ENCODE measurements at regions of chr6 and their contacts with region 1.

Region 1: DNA sequence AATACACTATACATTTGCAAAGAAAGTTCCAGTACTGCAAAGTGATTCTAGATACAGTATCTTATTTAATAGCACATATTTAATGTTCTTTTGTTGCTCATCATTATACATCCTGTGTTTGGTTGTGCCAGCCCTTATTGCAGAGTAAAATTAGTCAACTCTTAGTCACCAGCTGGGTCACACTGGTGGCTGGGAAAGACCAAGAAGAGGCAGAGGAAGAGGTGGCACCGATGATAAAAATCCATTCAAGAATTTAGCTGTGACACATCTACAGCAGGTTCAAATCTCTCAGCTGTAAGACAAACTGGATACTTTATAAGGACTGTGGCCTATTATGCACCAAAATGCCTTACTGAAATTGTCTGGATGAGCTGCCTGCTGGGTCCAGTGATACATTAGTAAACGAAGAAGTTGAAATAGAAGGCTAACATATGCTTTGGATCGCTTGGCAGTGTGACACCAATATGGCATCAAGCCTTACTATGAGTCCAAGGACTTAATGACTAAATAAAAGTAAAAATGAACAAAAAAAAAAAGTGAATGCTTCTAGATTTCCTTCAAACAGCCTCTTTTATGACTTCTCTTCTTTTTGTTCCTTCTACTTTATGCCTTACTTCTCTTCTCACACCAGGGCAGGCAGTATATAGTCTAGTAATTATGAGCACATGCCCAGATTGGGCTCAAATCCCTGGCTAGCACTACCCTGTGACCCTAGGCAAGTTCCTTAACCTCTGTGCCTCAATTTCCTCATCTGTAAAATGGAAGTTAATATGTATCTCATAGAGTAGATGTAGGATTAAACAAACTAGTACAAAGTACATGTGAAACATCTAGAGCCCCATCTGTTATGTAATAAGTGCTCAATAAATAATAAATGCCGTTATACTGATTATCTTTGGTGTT is 29.4 kb upstream of the RNF8 start:
- DNase-seq: peak; percentile 66
- H3K4me3 Mint-ChIP-seq: no peak overlapping the region
- H3K27ac Mint-ChIP-seq: no peak overlapping the region
- H3K4me1 Mint-ChIP-seq: peaks cover 20% of the 10 kb centered on the region
- H3K27me3 Mint-ChIP-seq: no peaks in the 10 kb centered on the region

Region 2: GRCh38 chr6:36924131-36924530 is 400.3 kb before region 1 on chr6:
- CTCF ChIA-PET with region 1: no interaction called
- intact Hi-C with region 1: no loop called
- DNase-seq: no peak
- H3K4me3 Mint-ChIP-seq: no peak overlapping the region
- H3K27ac Mint-ChIP-seq: no peak overlapping the region
- H3K4me1 Mint-ChIP-seq: no peaks in the 10 kb centered on the region
- H3K27me3 Mint-ChIP-seq: no peaks in the 10 kb centered on the region

Region 3: DNA sequence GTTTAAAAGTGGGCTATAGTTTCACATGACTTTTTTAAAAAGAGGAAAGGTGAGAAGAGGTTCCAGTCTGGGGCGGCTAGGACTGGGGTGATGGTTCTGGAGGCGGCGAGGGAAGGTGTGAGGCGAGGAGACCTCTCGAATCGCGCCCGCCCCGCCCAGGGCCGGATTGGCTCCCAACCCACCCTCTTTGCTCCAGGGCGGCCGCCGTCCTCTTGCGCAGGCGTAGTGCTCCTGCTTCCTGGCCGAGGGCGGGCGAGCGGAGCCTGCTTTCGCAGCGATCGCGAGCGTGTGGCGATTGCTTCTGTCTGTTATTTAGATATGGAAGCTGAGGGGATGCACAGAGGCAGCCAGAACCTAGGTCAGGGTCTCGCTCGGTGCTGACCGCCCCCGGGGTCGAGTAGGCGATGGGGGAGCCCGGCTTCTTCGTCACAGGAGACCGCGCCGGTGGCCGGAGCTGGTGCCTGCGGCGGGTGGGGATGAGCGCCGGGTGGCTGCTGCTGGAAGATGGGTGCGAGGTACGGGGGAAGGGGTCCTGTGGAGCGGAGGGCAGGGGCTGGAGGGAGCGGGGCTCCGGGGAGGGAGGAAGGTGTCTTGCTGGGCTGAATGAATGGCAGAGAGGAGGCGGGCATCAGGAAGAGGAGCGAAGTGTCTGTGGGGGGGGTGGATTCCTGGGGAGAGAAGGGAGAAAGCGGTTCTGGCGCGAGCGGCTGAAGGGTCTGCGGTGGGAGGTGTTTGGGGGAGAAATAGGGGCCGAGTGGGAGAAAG is 29.6 kb after region 1 on chr6 and contains the start of gene RNF8:
- CTCF ChIA-PET with region 1: interaction called, 3 read pairs
- intact Hi-C with region 1: loop called (anchors 2 kb)
- DNase-seq: peak; percentile 95
- H3K4me3 Mint-ChIP-seq: peak within 1 kb of the TSS; percentile 92
- H3K27ac Mint-ChIP-seq: peak within 1 kb of the TSS; percentile 70
- H3K4me1 Mint-ChIP-seq: peaks cover 24% of the 10 kb centered on the region
- H3K27me3 Mint-ChIP-seq: no peaks in the 10 kb centered on the region
- total RNA-seq, gene RNF8: 18.6 to 19.4 TPM

Region 4: GRCh38 chr6:37369321-37370201 is 45.2 kb after region 1 on chr6:
- CTCF ChIA-PET with region 1: interaction called, 10 read pairs
- intact Hi-C with region 1: no loop called
- DNase-seq: no peak
- H3K4me3 Mint-ChIP-seq: no peak overlapping the region
- H3K27ac Mint-ChIP-seq: no peak overlapping the region
- H3K4me1 Mint-ChIP-seq: no peaks in the 10 kb centered on the region
- H3K27me3 Mint-ChIP-seq: no peaks in the 10 kb centered on the region

Region 5: GRCh38 chr6:37483917-37484785 is 159.8 kb after region 1 on chr6:
- CTCF ChIA-PET with region 1: interaction called, 4 read pairs
- intact Hi-C with region 1: loop called (anchors 2 kb)
- DNase-seq: peak; percentile 79
- H3K4me3 Mint-ChIP-seq: no peak overlapping the region
- H3K27ac Mint-ChIP-seq: no peak overlapping the region
- H3K4me1 Mint-ChIP-seq: peaks cover 14% of the 10 kb centered on the region
- H3K27me3 Mint-ChIP-seq: no peaks in the 10 kb centered on the region

Measured in activated naive CD4-positive, alpha-beta T cell treated with anti-CD3 and anti-CD28 coated beads for 36 hours (primary cell).